ENCODE measurements at regions of chr14 and their contacts with region 1.

Region 1: GRCh38 chr14:30214461-30215090 is 286.9 kb upstream of the PRKD1 start:
- DNase-seq: peak; percentile 3
- H3K4me3 ChIP-seq: no peak overlapping the region
- H3K27ac ChIP-seq: no peak overlapping the region
- H3K4me1 ChIP-seq: 0 out of 4 replicates have a peak, but pooled peaks cover 0 to 5% of the 10 kb centered on the region in 2 experiments
- H3K27me3 ChIP-seq: peaks cover 9% of the 10 kb centered on the region; the same call in 1 of the 2 replicates
- CTCF ChIP-seq: peak; percentile 84
- EP300 ChIP-seq: no peak
- RAD21 ChIP-seq: peak; percentile 85

Region 2: GRCh38 chr14:29548948-29549370 is 665.6 kb before region 1 on chr14:
- CTCF ChIA-PET with region 1: interaction called, 45 read pairs
- POLR2A ChIA-PET with region 1: no interaction called
- DNase-seq: peak; percentile 23
- H3K4me3 ChIP-seq: no peak overlapping the region
- H3K27ac ChIP-seq: no peak overlapping the region
- H3K4me1 ChIP-seq: no peaks in the 10 kb centered on the region
- H3K27me3 ChIP-seq: peaks cover 15% of the 10 kb centered on the region; the same call in 1 of the 2 replicates
- CTCF ChIP-seq: peak; percentile 70
- EP300 ChIP-seq: no peak
- RAD21 ChIP-seq: peak; percentile 54

Region 3: GRCh38 chr14:30204431-30204980 is 10.1 kb before region 1 on chr14:
- CTCF ChIA-PET with region 1: interaction called, 15 read pairs
- POLR2A ChIA-PET with region 1: no interaction called
- DNase-seq: no peak
- H3K4me3 ChIP-seq: no peak overlapping the region
- H3K27ac ChIP-seq: no peak overlapping the region
- H3K4me1 ChIP-seq: no peaks in the 10 kb centered on the region
- H3K27me3 ChIP-seq: no peaks in the 10 kb centered on the region
- CTCF ChIP-seq: no peak
- EP300 ChIP-seq: no peak
- RAD21 ChIP-seq: no peak

Measured in SK-N-SH (cell line).